Psoas muscle (tissue), 8 donors: ENCODE measurements at regions of chr2 and their contacts with region 1.

Region 1: GRCh38 chr2:210324458-210324857 is 9.5 kb upstream of the MYL1 start:
- DNase-seq: no peak
- ATAC-seq: peak; percentile 90 to 94 (median 90)
- H3K4me3 ChIP-seq: peak overlapping the region; percentile 58
- H3K27ac ChIP-seq: peak overlapping the region; percentile 85
- H3K4me1 ChIP-seq: peaks cover 29% of the 10 kb centered on the region
- H3K27me3 ChIP-seq: no peaks in the 10 kb centered on the region
- CTCF ChIP-seq: no peak

Region 2: DNA sequence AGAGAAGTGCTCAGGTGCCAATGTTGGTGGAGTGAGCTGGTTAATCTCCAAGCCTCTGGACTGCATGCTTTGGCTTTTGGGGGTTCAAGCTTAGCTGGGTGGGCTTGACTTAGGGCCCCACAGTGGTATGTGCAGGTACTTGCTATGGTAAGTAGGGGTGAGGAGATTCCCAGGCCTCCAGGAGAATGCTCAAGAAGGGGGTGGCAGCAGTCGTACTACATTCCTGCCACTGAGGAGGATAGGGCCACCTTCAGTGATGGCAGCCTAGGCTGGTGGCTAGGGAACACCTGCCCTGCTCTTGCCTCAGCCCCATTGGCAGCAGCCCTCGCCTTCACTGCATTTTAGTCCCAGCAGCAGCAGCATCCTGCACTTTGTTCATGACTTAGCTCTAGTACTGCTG is 46.1 kb after region 1 on chr2:
- intact Hi-C with region 1: loop called in 1 of 2 experiments (anchors 5 kb)
- DNase-seq: no peak
- ATAC-seq: no peak
- H3K4me3 ChIP-seq: no peak overlapping the region
- H3K27ac ChIP-seq: peak overlapping the region; percentile 5
- H3K4me1 ChIP-seq: peaks cover 24% of the 10 kb centered on the region
- H3K27me3 ChIP-seq: no peaks in the 10 kb centered on the region
- CTCF ChIP-seq: no peak

Region 3: GRCh38 chr2:210392469-210392951 is 68.1 kb after region 1 on chr2:
- intact Hi-C with region 1: loop called (anchors 1 to 5 kb)
- DNase-seq: no peak
- ATAC-seq: peak; percentile 94 to 98 (median 95)
- H3K4me3 ChIP-seq: peak overlapping the region; percentile 21
- H3K27ac ChIP-seq: peak overlapping the region; percentile 86
- H3K4me1 ChIP-seq: peaks cover 27% of the 10 kb centered on the region
- H3K27me3 ChIP-seq: no peaks in the 10 kb centered on the region
- CTCF ChIP-seq: no peak